AG04450 (cell line): ENCODE measurements at regions of chr17 and their contacts with region 1.

Region 1: GRCh38 chr17:34199932-34200534 is 55.1 kb upstream of the CCL2 start:
- DNase-seq: peak; percentile 80
- H3K4me3 ChIP-seq: no peak overlapping the region
- H3K27ac ChIP-seq: no peak overlapping the region
- H3K27me3 ChIP-seq: peaks cover 3% of the 10 kb centered on the region
- CTCF ChIP-seq: peak; percentile 100

Region 2: DNA sequence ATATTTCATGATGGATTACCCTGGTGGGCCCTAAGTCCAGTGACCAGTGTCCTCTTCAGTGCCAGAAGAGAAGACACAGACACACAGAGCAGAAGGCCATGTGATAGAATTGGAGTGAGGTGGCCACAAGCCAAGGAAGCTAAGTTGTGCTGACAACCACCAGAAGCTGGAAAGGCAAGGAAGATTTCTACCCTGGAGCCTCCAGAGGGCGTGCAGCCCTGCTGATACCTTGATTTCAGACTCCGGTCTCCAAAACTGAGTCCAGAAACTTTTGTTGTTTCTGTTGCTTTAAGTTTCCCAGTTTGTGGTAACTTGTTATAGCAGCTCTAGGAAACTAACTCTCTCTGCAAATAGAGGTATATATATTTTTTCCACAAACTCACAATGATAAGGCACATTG is 510.3 kb before region 1 on chr17:
- CTCF ChIA-PET with region 1: no interaction called
- POLR2A ChIA-PET with region 1: no interaction called
- DNase-seq: no peak
- H3K4me3 ChIP-seq: no peak overlapping the region
- H3K27ac ChIP-seq: no peak overlapping the region
- H3K27me3 ChIP-seq: no peaks in the 10 kb centered on the region
- CTCF ChIP-seq: no peak

Region 3: DNA sequence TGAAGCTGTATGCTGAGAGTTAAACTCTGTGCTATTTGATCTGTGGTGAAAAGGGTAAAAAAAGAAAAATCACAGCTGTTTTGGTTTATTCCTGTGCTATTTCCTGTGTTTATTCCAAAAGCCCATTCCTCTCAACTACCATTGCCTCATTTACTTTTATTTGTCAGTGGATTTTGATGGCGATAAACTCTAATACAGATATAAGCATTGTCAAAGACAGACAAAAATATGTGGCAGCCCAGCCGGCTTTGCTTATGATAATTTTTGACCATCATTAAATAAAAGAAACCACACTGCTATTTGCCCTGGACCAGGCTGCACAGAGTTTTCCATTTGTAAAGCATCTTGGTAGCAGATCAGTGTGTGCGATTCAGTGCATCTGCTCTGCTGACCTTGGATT is 433.3 kb before region 1 on chr17:
- CTCF ChIA-PET with region 1: no interaction called
- POLR2A ChIA-PET with region 1: no interaction called
- DNase-seq: no peak
- H3K4me3 ChIP-seq: no peak overlapping the region
- H3K27ac ChIP-seq: no peak overlapping the region
- H3K27me3 ChIP-seq: no peaks in the 10 kb centered on the region
- CTCF ChIP-seq: no peak

Region 4: DNA sequence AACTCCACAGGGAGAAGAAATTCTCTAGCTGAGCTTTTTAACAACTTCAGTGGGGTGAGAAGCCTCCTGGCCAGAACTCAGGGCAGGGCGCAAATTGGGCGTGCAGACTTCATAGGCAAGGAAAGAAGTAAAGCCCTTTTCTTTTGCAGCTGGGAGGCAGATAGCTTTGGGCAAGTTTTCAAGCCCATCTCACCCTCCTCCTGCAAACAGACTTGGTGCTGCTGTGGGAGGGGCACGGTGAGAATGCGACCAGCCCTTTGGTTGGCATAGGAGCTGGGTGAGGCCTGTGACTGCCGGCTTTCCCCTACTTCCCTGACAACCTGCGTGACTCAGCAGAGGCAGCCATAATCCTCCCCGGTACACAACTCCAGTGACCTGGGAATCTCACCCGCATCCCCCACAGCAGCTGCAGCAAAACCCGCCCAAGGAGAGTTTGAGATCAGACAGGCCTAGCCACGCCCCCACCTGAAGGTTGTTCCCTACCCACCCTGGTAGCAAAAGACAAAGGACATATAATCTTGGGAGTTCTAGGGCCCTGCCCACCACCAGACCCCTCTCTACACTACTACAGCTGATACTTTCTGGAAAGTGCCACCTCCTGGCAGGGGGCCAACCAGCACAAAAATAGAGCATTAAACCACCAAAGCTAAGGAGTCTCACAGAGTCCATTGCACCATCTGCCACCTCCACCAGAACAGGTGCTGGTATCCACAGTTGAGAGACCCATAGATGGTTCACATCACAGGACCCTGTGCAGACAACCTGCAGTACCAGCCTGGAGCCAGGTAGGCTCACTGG is 140.4 kb before region 1 on chr17:
- CTCF ChIA-PET with region 1: no interaction called
- POLR2A ChIA-PET with region 1: no interaction called
- DNase-seq: no peak
- H3K4me3 ChIP-seq: no peak overlapping the region
- H3K27ac ChIP-seq: no peak overlapping the region
- H3K27me3 ChIP-seq: no peaks in the 10 kb centered on the region
- CTCF ChIP-seq: no peak

Region 5: GRCh38 chr17:34220754-34221395 is 20.8 kb after region 1 on chr17:
- CTCF ChIA-PET with region 1: interaction called, 15 read pairs
- POLR2A ChIA-PET with region 1: no interaction called
- DNase-seq: no peak
- H3K4me3 ChIP-seq: no peak overlapping the region
- H3K27ac ChIP-seq: no peak overlapping the region
- H3K27me3 ChIP-seq: peaks cover 4% of the 10 kb centered on the region
- CTCF ChIP-seq: no peak

Region 6: DNA sequence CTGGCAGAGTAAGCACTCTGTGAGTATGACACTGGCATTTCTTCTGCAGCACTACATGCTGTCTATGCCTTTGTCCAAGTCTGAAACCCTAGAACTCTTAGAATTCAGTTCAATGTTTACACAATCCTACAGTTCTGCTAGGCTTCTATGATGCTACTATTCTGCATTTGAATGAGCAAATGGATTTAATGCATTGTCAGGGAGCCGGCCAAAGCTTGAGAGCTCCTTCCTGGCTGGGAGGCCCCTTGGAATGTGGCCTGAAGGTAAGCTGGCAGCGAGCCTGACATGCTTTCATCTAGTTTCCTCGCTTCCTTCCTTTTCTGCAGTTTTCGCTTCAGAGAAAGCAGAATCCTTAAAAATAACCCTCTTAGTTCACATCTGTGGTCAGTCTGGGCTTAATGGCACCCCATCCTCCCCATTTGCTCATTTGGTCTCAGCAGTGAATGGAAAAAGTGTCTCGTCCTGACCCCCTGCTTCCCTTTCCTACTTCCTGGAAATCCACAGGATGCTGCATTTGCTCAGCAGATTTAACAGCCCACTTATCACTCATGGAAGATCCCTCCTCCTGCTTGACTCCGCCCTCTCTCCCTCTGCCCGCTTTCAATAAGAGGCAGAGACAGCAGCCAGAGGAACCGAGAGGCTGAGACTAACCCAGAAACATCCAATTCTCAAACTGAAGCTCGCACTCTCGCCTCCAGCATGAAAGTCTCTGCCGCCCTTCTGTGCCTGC is 54.8 kb after region 1 on chr17 and contains the start of gene CCL2:
- CTCF ChIA-PET with region 1: interaction called, 17 read pairs
- POLR2A ChIA-PET with region 1: interaction called, 3 read pairs
- DNase-seq: peak; percentile 65
- H3K4me3 ChIP-seq: peak within 1 kb of the TSS; percentile 79
- H3K27ac ChIP-seq: peak within 1 kb of the TSS; percentile 94
- H3K27me3 ChIP-seq: no peaks in the 10 kb centered on the region
- CTCF ChIP-seq: no peak
- polyA plus RNA-seq, gene CCL2: 119 and 176 TPM in 2 replicates

Region 7: GRCh38 chr17:34306466-34306865 is 106.4 kb after region 1 on chr17:
- CTCF ChIA-PET with region 1: interaction called, 53 read pairs
- POLR2A ChIA-PET with region 1: no interaction called
- DNase-seq: no peak
- H3K4me3 ChIP-seq: no peak overlapping the region
- H3K27ac ChIP-seq: peak overlapping the region; percentile 0
- H3K27me3 ChIP-seq: no peaks in the 10 kb centered on the region
- CTCF ChIP-seq: peak; percentile 61

Region 8: GRCh38 chr17:34370997-34371395 is 171.0 kb after region 1 on chr17:
- CTCF ChIA-PET with region 1: interaction called, 31 read pairs
- POLR2A ChIA-PET with region 1: no interaction called
- DNase-seq: no peak
- H3K4me3 ChIP-seq: no peak overlapping the region
- H3K27ac ChIP-seq: no peak overlapping the region
- H3K27me3 ChIP-seq: peaks cover 8% of the 10 kb centered on the region
- CTCF ChIP-seq: no peak